Testis (tissue), 5 donors: ENCODE measurements at regions of chr14 and their contacts with region 1.

Region 1: DNA sequence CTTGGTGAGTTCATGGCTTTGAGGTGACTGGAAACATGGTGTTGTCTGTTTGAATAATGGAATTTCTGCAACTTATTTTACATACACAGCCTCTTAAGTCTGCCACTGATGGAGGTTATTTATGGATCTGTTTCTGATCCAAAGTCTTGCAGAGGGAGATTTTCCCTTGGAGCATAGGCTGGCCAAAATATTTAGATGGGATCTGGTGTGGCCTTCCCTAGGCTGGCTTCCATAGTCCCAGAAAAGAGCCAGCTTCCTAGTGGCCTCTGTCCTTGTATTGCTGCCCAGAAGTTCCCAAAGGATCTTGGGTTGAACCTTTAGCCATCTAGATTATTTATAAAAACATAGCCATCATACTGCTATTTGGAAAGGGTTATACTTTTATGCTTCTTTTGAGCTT is 491.1 kb upstream of the RGS6 start:
- DNase-seq: no peak
- H3K4me3 ChIP-seq: no peak overlapping the region
- H3K27ac ChIP-seq: no peak overlapping the region
- H3K4me1 ChIP-seq: peaks cover 25% of the 10 kb centered on the region
- H3K27me3 ChIP-seq: no peaks in the 10 kb centered on the region
- CTCF ChIP-seq: no peak
- POLR2A ChIP-seq: no peak

Region 2: DNA sequence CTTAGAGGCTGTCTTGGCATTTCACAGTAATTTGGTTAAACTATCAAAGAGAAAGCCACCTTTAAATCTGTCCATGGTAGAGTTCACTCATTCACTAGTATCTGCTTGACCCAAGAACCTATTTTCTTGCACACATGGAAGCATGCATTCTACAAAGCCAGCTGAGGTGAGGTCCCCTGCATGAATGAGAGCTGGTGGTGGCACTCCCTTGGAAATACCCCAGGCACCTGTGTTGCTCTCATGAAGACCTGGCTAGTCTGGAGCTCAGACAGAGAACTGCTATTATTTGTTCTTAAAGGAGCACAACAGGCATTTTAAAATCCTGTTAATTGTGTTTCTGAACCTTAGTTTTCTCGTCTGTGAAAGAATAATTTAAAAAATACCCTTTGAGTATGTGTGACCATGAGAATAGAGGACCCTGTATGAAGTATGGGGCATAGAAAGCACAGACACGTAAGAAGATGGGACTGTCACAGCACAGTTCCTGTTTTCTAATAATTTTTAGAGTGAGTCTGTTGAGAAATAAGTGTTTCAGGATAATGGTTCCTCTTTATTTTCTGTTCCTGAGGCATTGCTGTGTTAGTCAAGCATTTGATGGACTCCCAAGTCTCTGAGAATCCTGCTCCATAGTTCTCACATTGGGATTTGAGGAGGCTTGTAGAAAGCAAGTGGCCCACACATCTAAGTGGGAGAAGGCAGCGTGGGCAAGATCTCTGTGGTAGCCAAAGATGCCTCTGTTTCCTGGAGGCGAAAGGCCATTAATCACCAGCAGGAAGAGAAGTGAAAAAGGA is 502.0 kb after region 1 on chr14:
- intact Hi-C with region 1: no loop called
- DNase-seq: no peak
- H3K4me3 ChIP-seq: no peak overlapping the region
- H3K27ac ChIP-seq: no peak overlapping the region
- H3K4me1 ChIP-seq: no peaks in the 10 kb centered on the region
- H3K27me3 ChIP-seq: no peaks in the 10 kb centered on the region
- CTCF ChIP-seq: no peak
- POLR2A ChIP-seq: no peak

Region 3: GRCh38 chr14:73209953-73210352 is 1768.8 kb after region 1 on chr14:
- intact Hi-C with region 1: loop called (anchors 5 kb)
- DNase-seq: no peak
- H3K4me3 ChIP-seq: no peak overlapping the region
- H3K27ac ChIP-seq: no peak overlapping the region
- H3K4me1 ChIP-seq: no peaks in the 10 kb centered on the region
- H3K27me3 ChIP-seq: no peaks in the 10 kb centered on the region
- CTCF ChIP-seq: no peak
- POLR2A ChIP-seq: no peak